ENCODE measurements at regions of chr17 and their contacts with region 1.

Region 1: DNA sequence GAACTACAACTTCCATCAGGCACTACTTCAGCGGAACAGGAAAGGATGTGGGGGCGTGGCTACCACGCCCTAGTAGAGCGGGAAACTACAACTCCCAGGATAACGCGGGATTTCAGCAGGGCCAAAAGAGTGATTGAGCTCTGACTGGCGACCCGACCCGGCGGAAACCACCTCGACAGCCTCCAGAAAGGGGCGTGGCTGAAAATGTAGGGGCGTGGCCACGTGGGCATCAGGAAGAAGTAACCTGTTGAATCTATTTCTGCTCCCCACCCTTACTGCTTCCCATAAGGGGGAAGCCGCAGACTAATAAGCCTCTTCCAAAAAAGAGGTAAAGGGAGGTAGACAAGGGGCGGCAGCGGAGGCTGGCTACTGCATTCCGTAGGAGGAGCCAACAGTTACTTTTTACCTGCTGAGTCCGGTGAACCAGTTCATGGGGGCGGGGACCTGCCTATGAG is at the start of gene TMEM102:
- DNase-seq: peak; percentile 96

Region 2: GRCh38 chr17:7336240-7337175 is 98.7 kb before region 1 on chr17 and contains the start of gene ACAP1:
- CTCF ChIA-PET with region 1: no interaction called
- POLR2A ChIA-PET with region 1: no interaction called
- DNase-seq: no peak

Region 3: GRCh38 chr17:7351665-7352501 is 83.4 kb before region 1 on chr17 and contains the start of gene KCTD11:
- CTCF ChIA-PET with region 1: interaction called, 11 read pairs
- POLR2A ChIA-PET with region 1: interaction called, 9 read pairs
- DNase-seq: peak; percentile 80

Region 4: GRCh38 chr17:7403977-7404736 is 31.1 kb before region 1 on chr17 and contains the start of gene TMEM256:
- CTCF ChIA-PET with region 1: no interaction called
- POLR2A ChIA-PET with region 1: interaction called, 25 read pairs
- DNase-seq: peak; percentile 93

Region 5: GRCh38 chr17:7484067-7484918 is 49.0 kb after region 1 on chr17 and contains the start of gene POLR2A:
- CTCF ChIA-PET with region 1: interaction called, 3 read pairs
- POLR2A ChIA-PET with region 1: interaction called, 55 read pairs
- DNase-seq: peak; percentile 96

Measured in HEK293T (cell line).